ENCODE measurements at regions of chr14 and their contacts with region 1.

Region 1: DNA sequence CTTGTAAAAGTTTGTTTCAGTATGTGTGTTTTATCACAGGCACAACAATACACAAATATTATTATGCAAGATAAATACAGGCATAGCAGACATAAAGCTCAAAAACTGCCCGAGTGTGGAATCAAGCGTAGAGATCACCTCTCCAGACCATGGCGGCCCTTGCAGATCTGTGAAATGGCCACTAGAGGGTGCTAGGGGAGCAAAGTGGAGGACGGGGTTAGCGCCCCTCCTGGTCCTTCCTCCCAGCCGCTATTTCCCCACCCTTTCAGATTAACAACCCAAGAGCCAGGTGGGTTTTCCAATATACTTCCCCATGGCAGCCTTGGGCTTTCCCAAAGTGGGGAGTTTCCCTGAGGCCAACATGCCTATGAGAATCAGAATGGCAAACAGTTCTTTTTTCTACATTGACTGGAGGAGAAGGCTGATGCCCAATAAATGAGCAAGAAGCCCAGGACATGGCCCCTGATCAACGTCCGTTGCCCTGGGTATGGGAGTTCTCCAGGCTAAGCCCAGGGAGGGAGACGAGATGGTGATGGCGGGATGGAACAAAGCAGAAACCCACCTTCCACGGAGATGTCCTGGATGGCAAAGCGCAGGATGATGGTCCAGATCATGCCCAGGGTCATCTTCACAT is 67.4 kb downstream of the ACTN1 start:
- DNase-seq: peak; percentile 91
- ATAC-seq: peak; percentile 91
- H3K4me3 ChIP-seq: no peak overlapping the region
- H3K27ac ChIP-seq: no peak overlapping the region
- H3K4me1 ChIP-seq: no peaks in the 10 kb centered on the region
- H3K27me3 ChIP-seq: no peaks in the 10 kb centered on the region
- CTCF ChIP-seq: peak; percentile 99

Region 2: DNA sequence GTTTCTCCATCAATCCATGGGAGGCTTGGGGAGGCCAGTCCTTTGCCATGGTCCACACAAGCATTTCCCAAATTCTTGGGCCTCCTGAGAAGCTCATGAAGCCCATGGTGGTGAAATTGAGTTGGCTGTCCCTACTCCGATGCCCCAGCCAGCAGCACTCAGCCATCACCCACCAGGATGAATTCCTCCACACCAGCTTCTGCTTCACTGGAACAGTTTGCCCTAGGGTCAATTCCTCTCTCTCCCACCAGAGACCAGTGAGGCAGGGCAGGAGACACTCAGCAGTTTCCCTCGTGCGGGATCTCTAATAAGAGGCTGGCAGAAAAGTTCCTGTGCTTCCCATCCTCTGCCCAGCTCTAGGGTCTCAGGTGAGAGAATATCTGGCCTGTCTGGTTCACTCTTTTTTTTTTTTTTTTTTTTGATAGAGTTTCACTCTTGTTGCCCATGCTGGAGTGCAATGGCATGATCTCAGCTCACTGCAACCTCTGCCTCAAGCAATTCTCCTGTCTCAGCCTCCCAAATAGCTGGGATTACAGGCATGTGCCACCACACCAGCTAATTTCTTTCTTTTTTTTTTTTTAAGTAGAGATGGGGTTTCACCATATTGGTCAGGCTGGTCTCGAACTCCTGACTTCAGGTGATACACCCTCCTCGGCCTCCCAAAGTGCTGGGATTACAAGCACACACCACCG is 73.9 kb after region 1 on chr14:
- CTCF ChIA-PET with region 1: no interaction called
- POLR2A ChIA-PET with region 1: no interaction called
- intact Hi-C with region 1: no loop called
- DNase-seq: no peak
- ATAC-seq: no peak
- H3K4me3 ChIP-seq: no peak overlapping the region
- H3K27ac ChIP-seq: no peak overlapping the region
- H3K4me1 ChIP-seq: peaks cover 2% of the 10 kb centered on the region
- H3K27me3 ChIP-seq: no peaks in the 10 kb centered on the region
- CTCF ChIP-seq: no peak

Region 3: GRCh38 chr14:69107407-69108003 is 195.8 kb after region 1 on chr14:
- CTCF ChIA-PET with region 1: interaction called, 7 read pairs
- POLR2A ChIA-PET with region 1: no interaction called
- intact Hi-C with region 1: loop called (anchors 1 kb)
- DNase-seq: peak; percentile 85
- ATAC-seq: peak; percentile 67
- H3K4me3 ChIP-seq: no peak overlapping the region
- H3K27ac ChIP-seq: no peak overlapping the region
- H3K4me1 ChIP-seq: no peaks in the 10 kb centered on the region
- H3K27me3 ChIP-seq: no peaks in the 10 kb centered on the region
- CTCF ChIP-seq: peak; percentile 94

Region 4: GRCh38 chr14:69231462-69231861 is 319.8 kb after region 1 on chr14:
- CTCF ChIA-PET with region 1: no interaction called
- POLR2A ChIA-PET with region 1: interaction called, 18 read pairs
- intact Hi-C with region 1: no loop called
- DNase-seq: no peak
- ATAC-seq: peak; percentile 68; the same call in 1 of the 2 replicates
- H3K4me3 ChIP-seq: no peak overlapping the region
- H3K27ac ChIP-seq: no peak overlapping the region
- H3K4me1 ChIP-seq: no peaks in the 10 kb centered on the region
- H3K27me3 ChIP-seq: no peaks in the 10 kb centered on the region
- CTCF ChIP-seq: no peak